K562 (cell line): ENCODE measurements at regions of chrX and their contacts with region 1.

Region 1: GRCh38 chrX:38166478-38167083 is 54.1 kb downstream of the SRPX start:
- DNase-seq: peak; percentile 7 to 34 (median 11)
- ATAC-seq: no peak
- H3K4me3 ChIP-seq: no peak overlapping the region
- H3K27ac ChIP-seq: no peak overlapping the region
- H3K4me1 ChIP-seq: no peaks in the 10 kb centered on the region; a peak in 1 of 5 replicates
- H3K27me3 ChIP-seq: no peaks in the 10 kb centered on the region; a peak in 1 of 5 replicates
- CTCF ChIP-seq: peak in 2 of 3 experiments; percentile 34 to 61; a peak in 3 of 6 replicates
- EP300 ChIP-seq: no peak
- POLR2A ChIP-seq: no peak
- RAD21 ChIP-seq: peak; percentile 59 to 75

Region 2: DNA sequence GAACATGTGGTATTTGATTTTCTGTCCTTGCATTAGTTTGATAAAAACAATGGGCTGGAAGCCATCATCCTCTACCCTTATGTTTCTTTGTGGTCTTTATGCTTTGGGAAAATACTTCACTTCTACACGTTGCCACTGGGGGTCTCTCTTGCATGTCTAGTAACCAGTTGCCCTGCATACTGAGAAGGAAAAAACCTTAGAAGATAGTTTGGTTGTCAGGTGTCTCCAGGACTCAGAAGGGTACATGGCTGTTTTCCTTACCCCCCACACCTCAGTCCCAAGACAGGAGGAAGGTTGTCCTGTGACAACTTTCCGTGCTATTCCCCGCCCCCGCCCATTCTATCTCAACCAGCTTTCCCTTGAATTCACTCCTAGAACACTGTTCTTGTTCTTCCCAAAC is 657.2 kb before region 1 on chrX:
- CTCF ChIA-PET with region 1: no interaction called
- POLR2A ChIA-PET with region 1: no interaction called
- in situ Hi-C with region 1: loop called (anchors 25 kb)
- intact Hi-C with region 1: loop called (anchors 10 kb)
- DNase-seq: peak in 1 of 4 experiments; percentile 8
- ATAC-seq: peak; percentile 77
- H3K4me3 ChIP-seq: no peak overlapping the region
- H3K27ac ChIP-seq: no peak overlapping the region
- H3K4me1 ChIP-seq: peaks cover 0 to 3% of the 10 kb centered on the region in 2 experiments; a peak in 1 of 5 replicates
- H3K27me3 ChIP-seq: no peaks in the 10 kb centered on the region
- CTCF ChIP-seq: peak; percentile 15 to 42 (median 40); a peak in 3 of 6 replicates
- EP300 ChIP-seq: no peak
- POLR2A ChIP-seq: no peak
- RAD21 ChIP-seq: peak; percentile 33 to 60

Region 3: DNA sequence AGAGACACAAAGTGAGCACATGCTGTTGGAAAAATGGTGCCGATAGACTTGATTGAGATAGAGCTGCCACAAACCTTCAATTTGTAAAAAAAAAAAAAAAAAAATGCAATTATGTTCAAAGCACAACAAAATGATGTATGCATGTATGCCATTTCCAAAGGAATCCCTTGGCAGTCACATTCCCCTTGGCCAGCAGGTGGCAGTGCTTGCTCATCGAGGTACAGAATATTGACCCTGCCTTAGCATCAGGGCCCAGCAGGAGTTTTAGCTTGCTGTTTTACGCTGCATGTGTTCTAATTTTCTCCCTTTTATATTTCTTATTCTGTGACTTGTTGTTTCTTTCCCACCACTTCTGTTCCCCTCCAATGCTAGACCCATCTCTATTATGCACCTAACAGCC is 421.2 kb before region 1 on chrX:
- CTCF ChIA-PET with region 1: no interaction called
- POLR2A ChIA-PET with region 1: no interaction called
- in situ Hi-C with region 1: loop called (anchors 25 kb)
- intact Hi-C with region 1: no loop called
- DNase-seq: peak; percentile 54 to 72 (median 68)
- ATAC-seq: peak; percentile 95
- H3K4me3 ChIP-seq: no peak overlapping the region
- H3K27ac ChIP-seq: no peak overlapping the region
- H3K4me1 ChIP-seq: no peaks in the 10 kb centered on the region
- H3K27me3 ChIP-seq: no peaks in the 10 kb centered on the region
- CTCF ChIP-seq: peak; percentile 76 to 80 (median 80)
- EP300 ChIP-seq: no peak
- POLR2A ChIP-seq: no peak
- RAD21 ChIP-seq: peak; percentile 85 to 89

Region 4: DNA sequence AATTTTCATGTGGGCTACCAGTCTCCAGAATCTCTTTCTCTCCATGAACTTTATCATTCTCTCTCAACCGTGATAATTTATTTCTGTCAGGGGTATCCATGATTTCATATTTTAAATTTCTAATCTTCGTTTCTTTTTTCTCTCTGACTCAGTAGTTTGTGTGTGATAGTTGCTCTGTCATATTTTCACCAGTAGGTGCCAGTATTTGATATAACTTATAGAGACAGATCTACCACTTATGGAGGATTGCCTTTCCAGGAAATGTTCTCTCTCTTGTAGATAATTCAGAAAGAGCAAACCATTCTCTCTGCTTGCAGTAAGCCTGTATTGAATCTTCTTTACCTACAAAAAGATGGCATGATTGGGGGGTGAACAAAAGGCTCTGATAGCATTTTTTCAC is 239.9 kb before region 1 on chrX:
- CTCF ChIA-PET with region 1: no interaction called
- POLR2A ChIA-PET with region 1: no interaction called
- in situ Hi-C with region 1: loop called (anchors 10 kb)
- intact Hi-C with region 1: loop called (anchors 1 kb)
- DNase-seq: peak; percentile 12 to 26 (median 16)
- ATAC-seq: peak; percentile 59; the same call in 1 of the 3 replicates
- H3K4me3 ChIP-seq: no peak overlapping the region
- H3K27ac ChIP-seq: no peak overlapping the region
- H3K4me1 ChIP-seq: no peaks in the 10 kb centered on the region
- H3K27me3 ChIP-seq: no peaks in the 10 kb centered on the region
- CTCF ChIP-seq: peak in 2 of 3 experiments; percentile 13 to 54; a peak in 2 of 6 replicates
- EP300 ChIP-seq: no peak
- POLR2A ChIP-seq: no peak
- RAD21 ChIP-seq: peak; percentile 45 to 67

Region 5: GRCh38 chrX:38080808-38081207 is 85.8 kb before region 1 on chrX:
- CTCF ChIA-PET with region 1: no interaction called
- POLR2A ChIA-PET with region 1: no interaction called
- in situ Hi-C with region 1: no loop called
- intact Hi-C with region 1: loop called (anchors 1 kb)
- DNase-seq: no peak
- ATAC-seq: no peak
- H3K4me3 ChIP-seq: no peak overlapping the region
- H3K27ac ChIP-seq: no peak overlapping the region
- H3K4me1 ChIP-seq: no peaks in the 10 kb centered on the region
- H3K27me3 ChIP-seq: no peaks in the 10 kb centered on the region
- CTCF ChIP-seq: no peak
- EP300 ChIP-seq: no peak
- POLR2A ChIP-seq: no peak
- RAD21 ChIP-seq: no peak

Region 6: GRCh38 chrX:38151441-38151840 is 15.1 kb before region 1 on chrX:
- CTCF ChIA-PET with region 1: no interaction called
- POLR2A ChIA-PET with region 1: no interaction called
- in situ Hi-C with region 1: no loop called
- intact Hi-C with region 1: no loop called
- DNase-seq: no peak
- ATAC-seq: no peak
- H3K4me3 ChIP-seq: no peak overlapping the region
- H3K27ac ChIP-seq: no peak overlapping the region
- H3K4me1 ChIP-seq: no peaks in the 10 kb centered on the region
- H3K27me3 ChIP-seq: no peaks in the 10 kb centered on the region; a peak in 1 of 5 replicates
- CTCF ChIP-seq: no peak
- EP300 ChIP-seq: no peak
- POLR2A ChIP-seq: no peak
- RAD21 ChIP-seq: no peak

Region 7: DNA sequence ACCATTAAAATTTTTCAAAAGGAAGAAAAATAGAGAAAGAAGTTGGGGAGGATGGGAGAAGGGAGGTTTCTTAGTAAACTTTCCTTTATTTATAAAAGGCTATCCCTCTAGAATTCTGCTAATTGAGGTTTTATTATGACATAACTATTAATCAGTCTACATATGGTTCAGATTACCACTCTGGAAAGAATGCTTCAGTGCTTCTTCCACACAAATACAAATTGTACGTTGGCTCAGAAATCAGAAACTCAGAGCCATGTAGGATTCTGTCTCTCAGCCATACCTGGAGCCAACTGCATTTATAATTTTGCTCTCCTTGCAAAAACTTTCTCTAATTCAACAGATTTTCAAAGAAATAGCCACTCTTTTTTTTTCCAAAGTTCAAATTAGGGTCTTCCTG is 17.0 kb after region 1 on chrX:
- CTCF ChIA-PET with region 1: no interaction called
- POLR2A ChIA-PET with region 1: no interaction called
- in situ Hi-C with region 1: no loop called
- intact Hi-C with region 1: no loop called
- DNase-seq: no peak
- ATAC-seq: no peak
- H3K4me3 ChIP-seq: no peak overlapping the region
- H3K27ac ChIP-seq: no peak overlapping the region
- H3K4me1 ChIP-seq: no peaks in the 10 kb centered on the region
- H3K27me3 ChIP-seq: no peaks in the 10 kb centered on the region
- CTCF ChIP-seq: no peak
- EP300 ChIP-seq: no peak
- POLR2A ChIP-seq: no peak
- RAD21 ChIP-seq: no peak